MCF 10A (cell line): ENCODE measurements at regions of chr5 and their contacts with region 1.

Region 1: DNA sequence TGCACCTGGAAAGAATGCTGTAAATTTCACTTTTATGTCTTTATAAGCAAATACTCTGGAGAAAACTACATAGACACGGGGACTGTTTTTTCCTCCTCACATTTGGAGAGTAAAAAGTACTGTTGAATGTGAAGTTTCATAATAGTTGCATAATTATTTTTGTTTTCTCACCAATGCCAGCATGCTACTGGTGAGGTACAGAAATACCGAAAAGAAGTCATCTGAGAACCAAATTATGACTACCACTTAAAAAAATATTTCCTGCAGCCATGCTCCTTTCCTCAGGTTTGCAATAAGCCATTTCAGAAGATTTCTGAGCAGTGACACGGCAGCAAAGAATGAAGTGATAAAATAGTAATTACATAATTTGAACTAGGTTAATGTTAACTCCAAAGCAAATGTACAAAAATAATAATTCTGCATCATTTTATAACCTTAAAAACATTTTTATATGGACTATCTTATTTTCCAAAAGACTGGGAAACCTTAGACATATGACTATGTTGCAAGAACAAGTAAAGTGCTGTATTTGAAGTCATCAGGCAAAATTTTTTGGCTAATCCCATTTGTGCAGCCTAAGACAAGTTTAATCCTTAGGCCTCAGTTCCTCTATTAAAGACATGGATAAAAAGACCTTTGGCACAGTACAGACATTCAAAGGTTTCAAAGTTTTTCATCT is 144.7 kb downstream of the PCSK1 start:
- DNase-seq: peak; percentile 68
- H3K4me3 Mint-ChIP-seq: no peak overlapping the region
- H3K27ac Mint-ChIP-seq: no peak overlapping the region
- H3K4me1 Mint-ChIP-seq: peaks cover 10% of the 10 kb centered on the region
- H3K27me3 Mint-ChIP-seq: no peaks in the 10 kb centered on the region
- CTCF ChIP-seq: no peak

Region 2: DNA sequence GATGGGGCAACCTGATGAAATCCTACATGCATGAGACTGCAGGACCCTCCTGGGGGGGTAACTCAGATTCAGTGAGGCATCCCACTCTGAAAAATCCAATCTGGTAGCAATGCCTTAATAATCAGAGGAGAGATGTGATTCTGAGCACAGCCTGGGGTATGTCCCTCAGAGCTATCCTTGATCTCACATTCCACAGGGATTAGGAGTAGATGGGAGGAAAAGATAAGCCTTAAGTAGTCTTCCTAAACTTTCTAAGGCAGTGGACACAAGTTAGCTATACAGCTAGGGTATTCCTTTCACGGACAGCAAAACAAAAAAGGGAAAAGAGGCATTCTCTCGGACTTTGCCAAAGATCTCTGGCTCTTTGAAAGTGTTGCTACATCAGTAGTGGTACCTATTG is 601.7 kb before region 1 on chr5:
- CTCF ChIA-PET with region 1: no interaction called
- POLR2A ChIA-PET with region 1: no interaction called
- intact Hi-C with region 1: no loop called
- DNase-seq: no peak
- H3K4me3 Mint-ChIP-seq: no peak overlapping the region
- H3K27ac Mint-ChIP-seq: no peak overlapping the region
- H3K4me1 Mint-ChIP-seq: no peaks in the 10 kb centered on the region
- H3K27me3 Mint-ChIP-seq: no peaks in the 10 kb centered on the region
- CTCF ChIP-seq: no peak

Region 3: GRCh38 chr5:96324708-96325107 is 36.4 kb after region 1 on chr5:
- CTCF ChIA-PET with region 1: no interaction called
- POLR2A ChIA-PET with region 1: interaction called, 4 read pairs
- intact Hi-C with region 1: loop called (anchors 5 kb)
- DNase-seq: peak; percentile 92
- H3K4me3 Mint-ChIP-seq: no peak overlapping the region
- H3K27ac Mint-ChIP-seq: peak overlapping the region; percentile 13
- H3K4me1 Mint-ChIP-seq: peaks cover 5% of the 10 kb centered on the region
- H3K27me3 Mint-ChIP-seq: no peaks in the 10 kb centered on the region
- CTCF ChIP-seq: no peak